Activated CD8-positive, alpha-beta T cell treated with anti-CD3 and anti-CD28 coated beads for 36 hours (primary cell): ENCODE measurements at regions of chr2 and their contacts with region 1.

Region 1: GRCh38 chr2:113138428-113139322 is 11.3 kb downstream of the IL1RN start:
- DNase-seq: peak; percentile 62
- ATAC-seq: peak; percentile 84
- H3K4me3 Mint-ChIP-seq: peak overlapping the region; percentile 20
- H3K27ac Mint-ChIP-seq: peak overlapping the region; percentile 75
- H3K4me1 Mint-ChIP-seq: peaks cover 26% of the 10 kb centered on the region
- H3K27me3 Mint-ChIP-seq: no peaks in the 10 kb centered on the region
- CTCF ChIP-seq: peak; percentile 86

Region 2: DNA sequence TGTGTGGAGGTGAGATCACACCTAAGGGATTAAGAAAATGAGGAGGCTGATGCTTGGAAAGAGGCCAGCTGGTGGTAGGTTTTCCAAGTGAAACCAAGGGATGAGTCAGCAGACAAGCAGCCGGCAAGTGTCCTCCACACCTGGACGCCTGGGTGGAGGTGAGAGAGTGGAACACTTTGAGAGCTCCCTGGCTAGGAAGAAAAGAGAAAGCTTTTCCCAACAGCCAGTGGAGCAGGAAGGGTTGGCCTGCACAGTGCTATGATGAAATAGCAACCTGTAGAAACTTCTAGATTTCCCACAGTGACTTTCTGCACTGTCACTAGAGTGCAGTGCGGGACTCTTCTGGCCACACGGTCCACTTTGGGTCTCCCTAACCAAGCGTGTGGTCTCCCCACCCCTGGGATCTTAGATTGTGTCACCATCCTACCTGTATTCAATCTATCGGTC is 247.3 kb before region 1 on chr2:
- CTCF ChIA-PET with region 1: no interaction called
- POLR2A ChIA-PET with region 1: no interaction called
- intact Hi-C with region 1: no loop called
- DNase-seq: no peak
- ATAC-seq: no peak
- H3K4me3 Mint-ChIP-seq: no peak overlapping the region
- H3K27ac Mint-ChIP-seq: no peak overlapping the region
- H3K4me1 Mint-ChIP-seq: no peaks in the 10 kb centered on the region
- H3K27me3 Mint-ChIP-seq: no peaks in the 10 kb centered on the region
- CTCF ChIP-seq: no peak

Region 3: DNA sequence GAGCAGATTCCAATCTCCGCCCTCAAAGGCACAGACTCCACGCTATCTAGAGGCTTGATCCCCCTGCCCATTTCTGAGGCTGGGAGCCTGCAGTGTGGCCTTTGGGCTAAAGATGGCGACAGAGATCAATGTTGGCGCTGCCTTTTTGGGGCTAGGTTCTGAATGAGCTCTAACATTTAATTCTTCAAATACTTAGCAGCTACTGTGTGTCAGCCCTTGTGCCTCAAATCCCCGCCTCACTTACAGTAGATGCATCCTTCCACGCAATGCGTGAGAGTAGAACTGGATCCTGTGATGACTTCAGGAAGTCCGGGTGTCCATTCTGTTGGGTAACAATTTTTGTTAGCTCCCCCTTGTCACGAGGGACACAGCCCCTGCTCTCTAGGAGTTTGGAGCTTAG is 58.5 kb before region 1 on chr2:
- CTCF ChIA-PET with region 1: interaction called, 190 read pairs
- POLR2A ChIA-PET with region 1: no interaction called
- intact Hi-C with region 1: loop called (anchors 1 kb)
- DNase-seq: peak; percentile 67
- ATAC-seq: peak; percentile 81
- H3K4me3 Mint-ChIP-seq: no peak overlapping the region
- H3K27ac Mint-ChIP-seq: no peak overlapping the region
- H3K4me1 Mint-ChIP-seq: peaks cover 12% of the 10 kb centered on the region
- H3K27me3 Mint-ChIP-seq: no peaks in the 10 kb centered on the region
- CTCF ChIP-seq: peak; percentile 87

Region 4: DNA sequence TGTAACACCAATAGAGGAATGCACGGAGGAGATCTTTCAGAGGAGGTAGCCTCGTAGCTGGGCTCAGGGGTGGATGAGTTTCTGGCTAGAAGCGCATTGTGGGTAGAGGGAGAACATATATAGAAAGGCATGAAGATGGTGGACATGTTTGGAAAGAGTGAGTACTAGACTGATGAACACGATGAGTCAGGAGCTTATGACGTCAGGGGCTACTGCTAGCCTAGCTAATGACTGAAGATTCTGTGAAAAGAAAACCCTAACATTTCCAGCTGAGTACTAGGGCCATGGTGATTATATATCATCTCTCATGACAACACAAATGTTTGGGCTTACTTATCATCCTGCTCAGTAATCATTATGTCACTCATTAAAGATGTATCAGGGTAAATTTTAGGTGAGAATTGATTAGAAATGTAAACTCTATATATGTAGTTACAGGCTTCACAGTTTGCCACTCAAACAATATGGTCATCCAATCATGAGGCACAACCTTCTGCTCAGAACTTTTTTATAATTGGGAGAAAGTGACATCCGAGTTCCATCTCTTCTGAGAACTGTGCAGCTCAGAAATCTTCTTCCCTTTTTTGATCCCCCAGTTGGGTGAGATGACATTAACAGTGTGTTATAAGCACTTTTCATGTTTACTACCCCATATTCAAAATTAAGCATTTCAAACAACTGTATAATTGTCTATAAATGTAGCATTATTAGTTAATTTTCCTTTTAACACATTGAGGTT is 33.5 kb before region 1 on chr2:
- CTCF ChIA-PET with region 1: interaction called, 37 read pairs
- POLR2A ChIA-PET with region 1: no interaction called
- intact Hi-C with region 1: no loop called
- DNase-seq: peak; percentile 87
- ATAC-seq: peak; percentile 65
- H3K4me3 Mint-ChIP-seq: no peak overlapping the region
- H3K27ac Mint-ChIP-seq: peak overlapping the region; percentile 87
- H3K4me1 Mint-ChIP-seq: peaks cover 38% of the 10 kb centered on the region
- H3K27me3 Mint-ChIP-seq: no peaks in the 10 kb centered on the region
- CTCF ChIP-seq: no peak

Region 5: DNA sequence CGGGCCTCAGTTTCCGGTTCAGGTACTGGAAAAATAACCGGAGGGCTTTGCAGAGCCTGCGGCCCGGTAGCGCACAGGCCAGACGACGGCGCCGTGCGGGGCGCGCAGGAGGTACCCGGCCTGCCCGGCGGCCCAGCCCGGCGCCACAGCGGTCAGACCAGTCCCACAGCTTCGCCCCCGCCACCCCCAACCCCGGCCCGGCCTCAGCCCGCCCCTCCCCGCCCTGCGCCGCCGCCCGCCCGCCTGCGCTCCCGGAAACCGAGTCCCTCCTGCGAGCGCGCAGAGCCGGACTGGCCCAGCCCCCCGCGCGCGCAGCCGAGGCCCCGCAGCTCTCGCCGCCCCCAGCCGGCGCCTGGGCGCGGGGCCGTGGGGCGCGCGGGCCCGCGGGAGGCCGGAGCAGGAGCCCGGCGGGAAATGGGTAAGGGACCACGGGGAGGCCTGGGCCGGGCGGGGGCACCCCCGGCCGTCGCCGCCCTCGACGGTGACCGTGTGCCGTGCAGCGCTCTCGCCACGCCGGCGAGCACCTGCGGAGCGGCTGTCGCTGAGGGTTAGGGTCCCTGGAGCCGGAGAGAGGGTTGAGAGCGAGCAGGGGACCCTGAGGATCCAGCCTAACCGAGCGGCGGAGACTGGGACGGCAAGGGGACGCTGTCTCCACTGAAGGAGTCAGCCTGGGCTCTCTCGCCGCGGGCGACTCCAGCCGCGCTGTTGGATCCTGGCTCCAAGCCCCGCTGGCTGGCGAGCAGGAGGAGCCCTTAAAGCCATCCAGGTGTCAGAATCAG is 18.6 kb after region 1 on chr2:
- CTCF ChIA-PET with region 1: interaction called, 75 read pairs
- POLR2A ChIA-PET with region 1: interaction called, 5 read pairs
- intact Hi-C with region 1: no loop called
- DNase-seq: peak; percentile 66
- ATAC-seq: peak; percentile 79
- H3K4me3 Mint-ChIP-seq: peak overlapping the region; percentile 84
- H3K27ac Mint-ChIP-seq: peak overlapping the region; percentile 86
- H3K4me1 Mint-ChIP-seq: peaks cover 21% of the 10 kb centered on the region
- H3K27me3 Mint-ChIP-seq: no peaks in the 10 kb centered on the region
- CTCF ChIP-seq: no peak

Region 6: GRCh38 chr2:113181258-113182051 is 42.8 kb after region 1 on chr2:
- CTCF ChIA-PET with region 1: interaction called, 127 read pairs
- POLR2A ChIA-PET with region 1: interaction called, 3 read pairs
- intact Hi-C with region 1: loop called (anchors 5 kb)
- DNase-seq: no peak
- ATAC-seq: peak; percentile 10
- H3K4me3 Mint-ChIP-seq: peak overlapping the region; percentile 84
- H3K27ac Mint-ChIP-seq: peak overlapping the region; percentile 79
- H3K4me1 Mint-ChIP-seq: peaks cover 90% of the 10 kb centered on the region
- H3K27me3 Mint-ChIP-seq: no peaks in the 10 kb centered on the region
- CTCF ChIP-seq: no peak

Region 7: DNA sequence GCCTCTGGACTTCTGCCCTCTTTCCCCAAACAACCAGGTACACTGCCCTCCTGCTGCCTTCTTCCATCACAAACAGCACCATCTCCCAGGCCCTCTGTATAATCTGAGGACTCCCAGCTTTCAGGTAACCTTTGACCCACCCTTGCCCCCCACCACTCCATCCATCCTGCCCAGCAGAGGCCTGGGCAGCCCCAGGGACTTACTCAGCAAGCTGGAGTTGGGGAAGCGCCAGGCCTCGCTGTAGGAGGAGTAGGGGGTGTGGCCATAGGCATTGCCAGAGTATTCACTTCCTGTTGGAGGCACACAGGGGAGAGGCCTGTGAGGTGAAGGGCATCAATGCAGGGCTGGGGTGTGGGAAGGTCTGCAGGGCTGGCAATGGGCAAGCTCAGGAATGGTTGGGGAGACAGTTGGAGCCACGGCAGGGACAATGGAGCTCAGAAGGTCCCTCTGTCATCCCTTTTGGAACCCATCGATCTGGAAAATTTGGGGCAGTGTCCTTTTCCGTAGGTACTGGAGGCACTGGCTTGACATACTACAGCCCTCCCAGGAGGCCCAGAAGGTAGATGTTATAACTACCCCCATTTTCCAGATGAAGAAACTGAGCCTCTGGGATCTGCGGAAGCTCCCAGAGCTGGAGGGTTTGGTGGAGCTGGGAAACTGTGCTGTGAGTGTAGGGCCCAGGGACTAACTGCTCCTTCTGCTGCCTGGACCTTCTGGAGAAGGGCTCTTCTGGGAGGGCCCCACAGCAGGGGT is 81.4 kb after region 1 on chr2:
- CTCF ChIA-PET with region 1: interaction called, 20 read pairs
- POLR2A ChIA-PET with region 1: no interaction called
- intact Hi-C with region 1: no loop called
- DNase-seq: no peak
- ATAC-seq: peak; percentile 60
- H3K4me3 Mint-ChIP-seq: no peak overlapping the region
- H3K27ac Mint-ChIP-seq: no peak overlapping the region
- H3K4me1 Mint-ChIP-seq: peaks cover 19% of the 10 kb centered on the region
- H3K27me3 Mint-ChIP-seq: no peaks in the 10 kb centered on the region
- CTCF ChIP-seq: no peak

Region 8: DNA sequence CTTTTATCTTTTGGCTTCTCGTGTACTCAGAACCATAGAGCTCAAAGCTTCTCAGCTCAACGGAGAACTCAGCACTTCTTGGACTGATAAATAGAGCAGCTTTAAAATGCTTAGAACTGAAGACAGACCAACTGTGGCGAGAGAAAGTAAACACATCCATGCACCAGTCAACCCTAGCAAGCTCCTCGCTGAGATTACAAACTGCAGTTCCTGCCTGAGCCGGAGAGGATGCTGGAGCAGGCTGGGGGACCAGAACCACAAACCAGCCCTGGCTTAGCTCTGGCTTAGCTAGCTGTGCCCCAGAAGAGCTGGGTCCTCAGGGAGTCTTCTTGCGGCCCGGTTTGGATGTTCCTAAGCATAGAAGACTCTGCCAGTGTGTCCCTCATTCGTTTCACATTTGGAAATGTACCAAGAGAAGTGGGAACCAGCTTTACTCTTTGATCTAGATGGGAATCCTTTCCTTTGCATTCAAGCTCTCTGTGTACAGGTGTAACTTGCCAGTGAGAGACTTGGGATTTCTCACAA is 134.4 kb after region 1 on chr2:
- CTCF ChIA-PET with region 1: interaction called, 10 read pairs
- POLR2A ChIA-PET with region 1: no interaction called
- intact Hi-C with region 1: no loop called
- DNase-seq: peak; percentile 61
- ATAC-seq: peak; percentile 94
- H3K4me3 Mint-ChIP-seq: no peak overlapping the region
- H3K27ac Mint-ChIP-seq: no peak overlapping the region
- H3K4me1 Mint-ChIP-seq: peaks cover 19% of the 10 kb centered on the region
- H3K27me3 Mint-ChIP-seq: peaks cover 50% of the 10 kb centered on the region
- CTCF ChIP-seq: peak; percentile 42